Activated T-helper 1 cell treated with anti-CD3 and anti-CD28 coated beads, Interleukin-12 subunit alpha, Interleukin-12 subunit beta, Interleukin-2, Interleukin-4 antibody, amounts not matched to agents 30 ng/mL and 10 ng/mL and 1 ng/mL, durations not matched to agents 14 hours and 24 hours and 36 hours (primary cell): ENCODE measurements at regions of chr20 and their contacts with region 1.

Region 1: DNA sequence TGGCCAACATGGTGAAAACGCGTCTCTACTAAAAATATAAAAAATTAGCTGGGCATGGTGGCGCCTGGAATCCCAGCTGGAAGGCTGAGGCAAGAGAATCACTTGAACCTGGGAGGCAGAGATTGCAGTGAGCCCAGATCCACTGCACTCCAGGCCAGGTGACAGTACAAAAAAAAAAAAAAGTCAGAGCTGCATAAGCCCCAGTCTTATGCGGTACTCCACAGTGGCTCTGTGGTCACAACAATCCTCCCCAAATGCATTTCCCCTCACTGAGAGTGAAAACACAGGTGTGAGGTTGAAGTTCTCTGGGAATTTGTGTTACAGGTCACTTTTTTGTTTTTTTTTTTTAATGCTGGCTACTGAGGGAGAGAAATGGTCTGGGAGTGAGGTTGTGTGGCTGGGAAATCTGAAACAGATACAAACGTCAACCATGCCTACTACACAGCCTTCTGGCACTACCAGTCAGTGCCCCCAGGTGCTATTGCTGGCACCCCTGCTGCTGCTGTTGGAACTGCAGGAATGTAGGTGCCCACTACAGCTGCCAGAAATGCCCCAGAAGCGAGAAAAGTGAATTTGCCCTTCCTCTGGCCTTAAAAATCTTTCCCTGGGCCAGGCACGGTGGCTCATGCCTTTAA is 5.7 kb downstream of the MRPS26 start:
- DNase-seq: no peak
- H3K4me3 Mint-ChIP-seq: no peak overlapping the region
- H3K27ac Mint-ChIP-seq: no peak overlapping the region
- H3K4me1 Mint-ChIP-seq: peaks cover 6% of the 10 kb centered on the region
- H3K27me3 Mint-ChIP-seq: peaks cover 2% of the 10 kb centered on the region

Region 2: DNA sequence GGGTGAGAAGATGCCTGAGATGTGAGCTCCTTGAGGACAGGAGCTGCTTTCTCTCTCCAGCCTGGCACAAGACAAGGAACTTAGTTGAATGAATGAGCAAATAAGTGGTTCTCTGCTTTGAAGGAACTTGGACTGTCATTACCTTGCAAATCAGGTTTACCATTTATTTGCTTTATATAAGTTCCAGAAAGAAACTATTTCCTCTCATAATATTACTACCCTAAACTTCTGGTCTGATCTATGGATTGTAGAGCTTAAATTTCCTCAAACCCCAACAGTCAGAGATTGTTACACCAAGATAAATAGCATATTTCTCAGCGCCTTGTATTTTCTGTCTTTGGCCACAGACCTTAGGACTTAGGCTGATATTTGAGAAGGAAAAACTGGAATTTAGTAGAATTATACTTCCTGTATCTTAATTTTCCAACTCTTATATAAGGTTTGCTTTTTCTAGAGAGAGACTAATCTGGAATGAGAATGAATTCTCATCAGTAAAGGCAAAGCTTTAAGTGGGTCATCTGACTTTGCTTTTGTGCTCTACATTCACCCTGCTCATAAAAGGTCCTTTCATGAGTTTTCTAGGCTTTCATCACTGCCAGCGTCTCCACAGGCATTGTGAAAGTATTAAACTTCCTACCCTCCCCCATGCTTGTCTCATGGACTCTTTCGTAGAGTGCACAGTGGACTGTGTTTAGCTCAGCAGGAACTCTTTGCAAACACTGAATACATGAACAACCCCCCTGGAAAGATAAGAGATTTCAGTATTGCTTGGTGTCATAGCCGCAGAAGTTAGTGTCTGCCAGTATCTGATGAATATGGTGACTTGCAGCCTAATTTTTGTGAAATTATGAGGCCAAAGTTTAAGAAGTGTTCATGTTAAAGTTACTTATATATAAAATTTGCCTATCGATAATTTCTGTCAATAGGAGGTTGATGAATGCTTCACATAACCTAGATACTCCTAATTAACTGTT is 104.2 kb before region 1 on chr20:
- intact Hi-C with region 1: no loop called
- DNase-seq: no peak
- H3K4me3 Mint-ChIP-seq: no peak overlapping the region
- H3K27ac Mint-ChIP-seq: no peak overlapping the region
- H3K4me1 Mint-ChIP-seq: peaks cover 5% of the 10 kb centered on the region
- H3K27me3 Mint-ChIP-seq: no peaks in the 10 kb centered on the region

Region 3: DNA sequence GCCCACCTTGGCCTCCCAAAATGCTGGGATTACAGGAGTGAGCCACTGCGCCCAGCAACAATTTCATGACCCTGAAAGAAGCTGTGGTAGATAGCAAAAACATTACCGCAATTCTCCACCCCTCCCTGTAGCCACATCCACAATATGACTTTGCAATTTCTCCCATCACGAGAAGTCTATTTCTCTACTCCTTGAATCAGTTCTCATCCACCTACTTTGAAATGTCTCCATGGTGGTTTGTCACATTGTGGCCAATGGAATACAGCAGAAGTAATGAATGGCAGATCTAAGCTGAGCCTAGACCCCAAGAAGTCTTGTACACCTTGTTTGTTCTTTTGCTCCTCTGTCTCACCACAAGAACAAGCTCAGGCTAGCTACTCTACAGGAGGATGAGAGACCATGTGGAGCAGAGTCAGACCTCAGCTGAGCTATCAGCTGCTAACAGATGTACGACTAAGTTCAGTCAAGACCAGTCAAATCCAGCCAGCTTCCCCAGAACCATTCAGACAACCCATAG is 26.2 kb after region 1 on chr20:
- intact Hi-C with region 1: loop called (anchors 1 kb)
- DNase-seq: no peak
- H3K4me3 Mint-ChIP-seq: no peak overlapping the region
- H3K27ac Mint-ChIP-seq: peak overlapping the region; percentile 56
- H3K4me1 Mint-ChIP-seq: peaks cover 35% of the 10 kb centered on the region
- H3K27me3 Mint-ChIP-seq: peaks cover 37% of the 10 kb centered on the region

Region 4: DNA sequence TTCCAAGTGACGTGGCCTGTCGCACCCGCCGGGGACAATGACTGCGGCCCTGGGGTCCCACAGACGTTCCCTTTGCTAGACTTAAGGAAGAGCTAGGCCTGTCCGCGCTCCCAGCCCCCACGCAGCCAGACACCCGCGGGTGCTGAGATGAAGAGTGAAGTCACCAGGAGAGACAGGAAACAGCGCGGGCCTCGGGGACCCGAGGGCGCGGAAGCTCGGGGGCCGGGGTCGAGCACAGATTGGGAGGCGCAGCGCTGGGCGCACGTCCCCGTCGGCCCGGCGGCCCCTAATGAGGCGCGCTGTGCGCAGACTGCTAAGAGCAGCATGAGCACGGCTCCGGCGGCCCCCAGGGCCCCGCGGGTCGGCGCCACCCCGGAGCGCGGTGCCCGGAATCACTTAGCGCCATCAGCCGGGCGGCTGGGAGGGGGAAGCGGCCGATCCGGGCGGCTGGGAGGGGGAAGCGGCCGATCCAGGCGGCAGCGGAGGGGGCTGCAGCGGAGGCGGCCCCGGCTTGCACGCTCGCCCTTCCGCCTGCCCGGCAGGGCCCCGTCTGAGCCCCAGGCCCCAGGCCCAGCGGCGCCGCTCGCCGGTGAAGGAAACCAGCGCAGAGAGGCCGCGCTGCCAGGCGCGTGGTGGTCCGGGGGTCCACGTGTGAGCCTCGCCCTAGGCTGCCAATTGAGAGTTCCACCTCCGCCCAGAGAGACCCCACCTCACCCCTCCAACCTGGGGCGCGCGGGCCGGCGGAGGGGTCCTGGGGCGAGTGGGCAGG is 41.3 kb after region 1 on chr20:
- intact Hi-C with region 1: loop called (anchors 2 kb)
- DNase-seq: no peak
- H3K4me3 Mint-ChIP-seq: peak overlapping the region; percentile 85
- H3K27ac Mint-ChIP-seq: peak overlapping the region; percentile 83
- H3K4me1 Mint-ChIP-seq: peaks cover 11% of the 10 kb centered on the region
- H3K27me3 Mint-ChIP-seq: peaks cover 34% of the 10 kb centered on the region

Region 5: GRCh38 chr20:3115190-3116107 is 63.9 kb after region 1 on chr20:
- intact Hi-C with region 1: loop called (anchors 1 kb)
- DNase-seq: no peak
- H3K4me3 Mint-ChIP-seq: no peak overlapping the region
- H3K27ac Mint-ChIP-seq: no peak overlapping the region
- H3K4me1 Mint-ChIP-seq: peaks cover 5% of the 10 kb centered on the region
- H3K27me3 Mint-ChIP-seq: no peaks in the 10 kb centered on the region

Region 6: GRCh38 chr20:3156811-3157619 is 105.5 kb after region 1 on chr20:
- intact Hi-C with region 1: loop called (anchors 2 kb)
- DNase-seq: no peak
- H3K4me3 Mint-ChIP-seq: peak overlapping the region; percentile 78
- H3K27ac Mint-ChIP-seq: peak overlapping the region; percentile 90
- H3K4me1 Mint-ChIP-seq: peaks cover 44% of the 10 kb centered on the region
- H3K27me3 Mint-ChIP-seq: no peaks in the 10 kb centered on the region

Region 7: GRCh38 chr20:3204124-3204822 is 152.8 kb after region 1 on chr20 and contains the start of gene DDRGK1:
- intact Hi-C with region 1: loop called (anchors 2 kb)
- DNase-seq: peak; percentile 86
- H3K4me3 Mint-ChIP-seq: peak within 1 kb of the TSS; percentile 96
- H3K27ac Mint-ChIP-seq: peak within 1 kb of the TSS; percentile 97
- H3K4me1 Mint-ChIP-seq: peaks cover 23% of the 10 kb centered on the region
- H3K27me3 Mint-ChIP-seq: no peaks in the 10 kb centered on the region
- total RNA-seq, gene DDRGK1: 67.5 and 72.3 TPM in 2 replicates

Region 8: GRCh38 chr20:3316136-3316535 is 264.6 kb after region 1 on chr20:
- intact Hi-C with region 1: loop called (anchors 1 kb)
- DNase-seq: no peak
- H3K4me3 Mint-ChIP-seq: no peak overlapping the region
- H3K27ac Mint-ChIP-seq: no peak overlapping the region
- H3K4me1 Mint-ChIP-seq: no peaks in the 10 kb centered on the region
- H3K27me3 Mint-ChIP-seq: peaks cover 2% of the 10 kb centered on the region